ENCODE measurements at regions of chr17 and their contacts with region 1.

Region 1: DNA sequence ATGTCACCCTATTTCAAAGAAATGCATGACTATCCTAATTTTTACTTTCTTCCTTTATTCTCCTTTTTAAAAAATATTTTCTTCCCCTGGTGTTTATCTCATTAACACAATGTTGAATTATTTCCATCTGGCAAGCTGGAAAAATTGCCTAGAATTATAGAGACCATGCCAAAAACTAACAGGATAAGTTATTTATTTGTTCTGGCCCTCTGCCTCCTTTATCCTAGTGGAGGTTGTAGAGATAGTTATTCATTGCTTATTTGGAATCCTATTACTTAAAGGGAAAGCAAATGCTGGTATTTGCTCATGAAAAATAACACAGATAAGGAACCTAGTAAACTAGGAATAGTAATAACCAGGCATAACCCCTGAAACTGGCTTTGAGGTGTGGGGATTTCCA is 684.9 kb upstream of the KIF2B start:
- DNase-seq: no peak
- H3K4me3 Mint-ChIP-seq: no peak overlapping the region
- H3K27ac Mint-ChIP-seq: no peak overlapping the region
- H3K4me1 Mint-ChIP-seq: no peaks in the 10 kb centered on the region
- H3K27me3 Mint-ChIP-seq: no peaks in the 10 kb centered on the region
- CTCF ChIP-seq: no peak

Region 2: GRCh38 chr17:52762147-52762793 is 375.6 kb before region 1 on chr17:
- CTCF ChIA-PET with region 1: no interaction called
- intact Hi-C with region 1: loop called (anchors 5 kb)
- DNase-seq: no peak
- H3K4me3 Mint-ChIP-seq: no peak overlapping the region
- H3K27ac Mint-ChIP-seq: no peak overlapping the region
- H3K4me1 Mint-ChIP-seq: no peaks in the 10 kb centered on the region
- H3K27me3 Mint-ChIP-seq: no peaks in the 10 kb centered on the region
- CTCF ChIP-seq: no peak

Region 3: DNA sequence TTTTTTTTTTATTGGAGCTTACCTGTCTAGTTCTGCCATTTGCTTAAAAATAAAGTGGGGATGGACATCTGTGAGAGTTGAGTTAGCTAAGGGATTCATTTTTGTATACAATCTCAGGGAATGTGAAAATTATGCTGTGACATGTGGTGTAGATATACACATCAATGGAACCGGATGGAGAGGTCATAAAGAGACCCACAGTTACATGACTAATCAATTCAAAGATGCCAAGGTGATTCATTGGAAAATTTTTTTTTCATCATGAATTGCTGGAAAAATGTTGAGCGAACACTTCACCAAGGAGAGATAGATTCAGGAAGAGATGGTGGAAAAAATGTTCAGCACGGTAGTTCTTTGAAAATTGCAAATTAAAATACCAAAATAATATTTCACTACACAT is 79.4 kb after region 1 on chr17:
- CTCF ChIA-PET with region 1: no interaction called
- intact Hi-C with region 1: no loop called
- DNase-seq: no peak
- H3K4me3 Mint-ChIP-seq: no peak overlapping the region
- H3K27ac Mint-ChIP-seq: no peak overlapping the region
- H3K4me1 Mint-ChIP-seq: no peaks in the 10 kb centered on the region
- H3K27me3 Mint-ChIP-seq: no peaks in the 10 kb centered on the region
- CTCF ChIP-seq: no peak

Measured in Calu3 (cell line).